ENCODE measurements at regions of chr11 and their contacts with region 1.

Region 1: DNA sequence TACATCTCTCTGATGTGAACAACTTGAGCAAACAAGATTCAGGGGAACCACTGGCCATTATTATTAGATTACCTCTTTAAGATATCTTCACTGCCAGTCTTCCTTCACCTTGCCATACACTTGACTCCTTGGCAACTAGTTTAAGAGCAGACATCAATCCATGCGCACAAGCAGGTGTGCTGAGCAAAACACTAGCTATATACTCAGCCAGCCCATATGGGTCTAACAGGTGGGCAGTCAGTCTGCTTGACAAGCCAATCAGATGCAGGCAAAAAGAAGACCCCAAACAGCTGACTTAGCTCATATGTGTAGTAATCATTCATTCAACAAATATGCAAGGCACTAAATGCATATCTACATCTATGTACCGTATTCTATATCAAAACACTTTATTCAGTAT is 101.2 kb downstream of the SIK3 start:
- DNase-seq: no peak
- ATAC-seq: no peak
- H3K4me3 ChIP-seq: no peak overlapping the region
- H3K27ac ChIP-seq: no peak overlapping the region
- H3K4me1 ChIP-seq: no peaks in the 10 kb centered on the region
- H3K27me3 ChIP-seq: no peaks in the 10 kb centered on the region
- CTCF ChIP-seq: no peak

Region 2: GRCh38 chr11:116257104-116257503 is 740.0 kb before region 1 on chr11:
- CTCF ChIA-PET with region 1: no interaction called
- POLR2A ChIA-PET with region 1: no interaction called
- intact Hi-C with region 1: no loop called
- DNase-seq: no peak
- ATAC-seq: no peak
- H3K4me3 ChIP-seq: no peak overlapping the region
- H3K27ac ChIP-seq: no peak overlapping the region
- H3K4me1 ChIP-seq: no peaks in the 10 kb centered on the region
- H3K27me3 ChIP-seq: peaks cover 9% of the 10 kb centered on the region; the same call in 1 of the 2 replicates
- CTCF ChIP-seq: no peak

Region 3: GRCh38 chr11:116791002-116791812 is 205.9 kb before region 1 on chr11:
- CTCF ChIA-PET with region 1: no interaction called
- POLR2A ChIA-PET with region 1: no interaction called
- intact Hi-C with region 1: no loop called
- DNase-seq: peak; percentile 48
- ATAC-seq: no peak
- H3K4me3 ChIP-seq: no peak overlapping the region
- H3K27ac ChIP-seq: no peak overlapping the region
- H3K4me1 ChIP-seq: peaks cover 35% of the 10 kb centered on the region
- H3K27me3 ChIP-seq: no peaks in the 10 kb centered on the region
- CTCF ChIP-seq: peak; percentile 82

Region 4: GRCh38 chr11:116895048-116895757 is 101.9 kb before region 1 on chr11:
- CTCF ChIA-PET with region 1: no interaction called
- POLR2A ChIA-PET with region 1: no interaction called
- intact Hi-C with region 1: no loop called
- DNase-seq: no peak
- ATAC-seq: no peak
- H3K4me3 ChIP-seq: no peak overlapping the region
- H3K27ac ChIP-seq: no peak overlapping the region
- H3K4me1 ChIP-seq: peaks cover 5% of the 10 kb centered on the region; the same call in 1 of the 2 replicates
- H3K27me3 ChIP-seq: no peaks in the 10 kb centered on the region
- CTCF ChIP-seq: peak; percentile 37; the same call in 1 of the 2 replicates

Region 5: GRCh38 chr11:117045196-117045595 is 48.1 kb after region 1 on chr11:
- CTCF ChIA-PET with region 1: interaction called, 15 read pairs
- POLR2A ChIA-PET with region 1: no interaction called
- intact Hi-C with region 1: no loop called
- DNase-seq: peak; percentile 49
- ATAC-seq: no peak; the same call in 1 of the 2 replicates
- H3K4me3 ChIP-seq: no peak overlapping the region
- H3K27ac ChIP-seq: peak overlapping the region; percentile 32; the same call in 1 of the 2 replicates
- H3K4me1 ChIP-seq: peaks cover 20% of the 10 kb centered on the region
- H3K27me3 ChIP-seq: no peaks in the 10 kb centered on the region
- CTCF ChIP-seq: no peak

Measured in PC-3 (cell line).